ENCODE measurements at regions of chr2 and their contacts with region 1.

Region 1: GRCh38 chr2:47373747-47374146 is 29.2 kb upstream of the MSH2 start:
- DNase-seq: peak; percentile 18
- ATAC-seq: no peak
- H3K4me3 ChIP-seq: no peak overlapping the region
- H3K27ac ChIP-seq: no peak overlapping the region
- H3K4me1 ChIP-seq: peaks cover 14% of the 10 kb centered on the region
- H3K27me3 ChIP-seq: no peaks in the 10 kb centered on the region
- CTCF ChIP-seq: peak; percentile 42

Region 2: DNA sequence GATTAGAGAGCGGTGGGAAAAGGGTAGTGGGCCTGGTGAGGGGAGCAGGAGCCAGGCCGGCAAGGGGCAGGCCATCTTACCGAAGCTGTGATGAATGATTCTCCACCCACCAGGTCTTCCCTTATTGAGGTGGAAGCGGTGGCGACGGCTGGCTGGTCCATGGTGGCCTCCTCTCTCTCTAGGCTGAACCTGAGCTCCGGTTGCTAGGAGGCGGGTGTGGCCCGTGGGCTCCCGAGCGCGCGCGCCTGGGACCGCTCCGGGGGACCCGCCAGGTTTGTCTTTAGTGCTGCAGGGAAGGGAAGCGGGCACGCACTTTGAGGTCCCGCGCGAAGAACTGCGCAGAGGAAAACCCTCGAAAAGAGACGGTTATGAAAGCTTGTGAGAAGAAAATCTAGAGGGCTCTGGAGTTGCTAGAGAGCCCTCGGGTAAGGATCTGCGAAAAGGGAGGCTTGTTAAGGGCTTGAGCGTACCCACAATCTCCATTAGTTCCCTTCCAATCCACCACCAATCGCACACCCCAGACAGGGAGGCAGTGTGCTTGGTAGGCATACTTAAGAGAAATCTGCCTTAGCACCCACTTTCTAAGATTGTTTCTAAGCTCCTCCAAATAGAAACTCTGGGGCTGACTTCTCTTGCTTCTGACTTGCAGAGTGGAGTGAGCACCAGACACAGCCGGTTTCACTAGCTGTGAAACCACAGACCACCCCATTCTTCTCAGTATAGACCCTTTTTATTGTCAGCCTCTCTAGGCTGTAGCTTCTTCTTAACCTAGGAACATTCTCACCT is 218.5 kb before region 1 on chr2 and contains the start of gene STPG4:
- CTCF ChIA-PET with region 1: no interaction called
- POLR2A ChIA-PET with region 1: no interaction called
- intact Hi-C with region 1: no loop called
- DNase-seq: no peak
- ATAC-seq: peak; percentile 12; the same call in 1 of the 2 replicates
- H3K4me3 ChIP-seq: no peak within 1 kb of the TSS
- H3K27ac ChIP-seq: no peak within 1 kb of the TSS
- H3K4me1 ChIP-seq: no peaks in the 10 kb centered on the region
- H3K27me3 ChIP-seq: no peaks in the 10 kb centered on the region
- CTCF ChIP-seq: no peak
- total RNA-seq, gene STPG4: 2.4 TPM in 1 of 2 replicates, not detected in the other

Region 3: DNA sequence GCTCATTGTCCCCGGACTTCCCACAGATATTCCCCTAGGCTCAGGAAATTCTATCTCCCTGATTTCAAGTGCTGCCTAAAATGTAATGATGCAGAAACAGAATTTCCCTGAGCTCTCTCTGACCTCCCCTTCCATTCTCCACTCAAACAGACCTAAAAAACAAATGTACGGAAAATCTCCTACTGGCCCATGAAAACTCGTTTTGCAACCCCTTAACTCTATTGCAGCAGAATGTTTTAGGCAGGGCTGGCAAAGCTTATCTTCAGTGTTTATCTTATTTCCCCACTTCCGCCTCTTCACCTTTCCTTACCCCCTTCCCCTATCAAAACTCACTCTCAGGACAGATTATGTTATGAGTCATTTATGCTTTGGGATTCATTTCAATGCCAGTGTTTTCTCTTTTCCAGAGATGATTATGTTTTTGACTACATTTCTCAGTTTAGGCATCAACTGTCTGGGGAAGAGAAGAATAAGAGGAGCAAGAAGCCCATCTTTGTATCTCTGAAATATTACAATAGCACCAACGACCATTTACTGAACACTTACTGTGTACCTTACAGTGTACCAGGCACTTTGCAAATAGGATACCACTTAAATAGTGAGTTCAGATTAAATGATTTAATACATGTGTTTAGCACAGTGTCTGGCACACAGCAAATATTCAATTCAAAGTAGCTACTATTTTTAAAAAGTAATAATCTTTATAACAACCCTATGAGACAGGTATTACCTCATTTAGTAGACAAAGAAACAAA is 164.7 kb before region 1 on chr2:
- CTCF ChIA-PET with region 1: no interaction called
- POLR2A ChIA-PET with region 1: no interaction called
- intact Hi-C with region 1: no loop called
- DNase-seq: peak; percentile 67
- ATAC-seq: peak; percentile 74
- H3K4me3 ChIP-seq: 0 out of 2 replicates have a peak overlapping the region, but pooled peaks have one; percentile 1
- H3K27ac ChIP-seq: peak overlapping the region; percentile 5; the same call in 1 of the 2 replicates
- H3K4me1 ChIP-seq: peaks cover 16% of the 10 kb centered on the region
- H3K27me3 ChIP-seq: no peaks in the 10 kb centered on the region
- CTCF ChIP-seq: no peak

Region 4: GRCh38 chr2:47336259-47337238 is 37.2 kb before region 1 on chr2:
- CTCF ChIA-PET with region 1: interaction called, 12 read pairs
- POLR2A ChIA-PET with region 1: no interaction called
- intact Hi-C with region 1: loop called (anchors 1 kb)
- DNase-seq: no peak
- ATAC-seq: no peak
- H3K4me3 ChIP-seq: no peak overlapping the region
- H3K27ac ChIP-seq: no peak overlapping the region
- H3K4me1 ChIP-seq: peaks cover 14% of the 10 kb centered on the region
- H3K27me3 ChIP-seq: no peaks in the 10 kb centered on the region
- CTCF ChIP-seq: no peak

Measured in PC-3 (cell line).